WTC11 (cell line): ENCODE measurements at regions of chr6 and their contacts with region 1.

Region 1: DNA sequence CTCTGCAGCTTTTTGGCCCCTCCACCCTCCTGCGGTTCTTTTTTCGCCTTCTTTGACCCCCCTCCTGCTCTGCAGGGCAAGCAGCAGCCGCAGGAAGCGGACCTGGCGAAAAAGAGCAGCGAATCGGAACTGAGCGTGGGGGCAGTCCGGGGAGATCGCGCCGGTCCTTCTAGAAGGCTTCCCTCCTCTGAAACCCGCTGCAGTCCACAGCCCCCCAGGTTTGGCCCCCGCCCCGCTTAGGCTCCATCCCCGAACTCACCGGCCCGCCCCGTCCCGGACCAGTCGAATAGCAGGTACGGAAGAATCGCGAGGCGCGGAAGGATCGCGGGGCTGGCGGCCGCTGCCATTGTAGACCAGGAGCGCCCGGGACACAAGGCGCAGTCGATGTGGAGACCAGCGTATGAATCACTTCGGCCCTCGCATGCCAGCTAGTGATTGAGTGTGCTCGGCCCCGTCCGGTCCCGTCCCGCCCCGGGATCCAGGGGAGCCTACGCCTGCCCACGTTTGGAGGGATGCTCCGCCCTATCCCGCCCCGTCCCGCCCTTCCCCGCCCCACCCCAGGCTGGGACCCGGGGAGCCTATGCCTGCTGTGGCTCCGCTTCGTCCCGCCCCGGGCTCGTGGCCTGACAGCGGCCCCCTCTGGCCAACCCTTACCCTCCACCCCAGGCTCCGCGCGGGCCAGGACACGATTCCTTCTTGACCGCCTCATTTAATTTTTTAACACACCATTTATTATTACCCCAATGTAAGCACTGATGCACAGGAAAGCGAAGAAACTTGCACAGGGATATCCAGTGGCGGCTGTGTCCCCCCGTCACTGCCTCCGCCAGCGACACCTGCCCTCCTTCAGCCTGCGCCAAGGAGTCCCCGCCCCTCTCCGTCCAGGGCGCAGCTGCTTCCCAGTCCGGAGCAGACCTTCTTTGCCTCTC is at the start of gene ULBP3:
- DNase-seq: peak; percentile 83
- ATAC-seq: peak; percentile 90
- H3K4me3 Mint-ChIP-seq: peak within 1 kb of the TSS; percentile 74
- H3K27ac Mint-ChIP-seq: no peak within 1 kb of the TSS
- H3K4me1 Mint-ChIP-seq: peaks cover 12% of the 10 kb centered on the region
- H3K27me3 Mint-ChIP-seq: peaks cover 40% of the 10 kb centered on the region
- CTCF ChIP-seq: no peak
- total RNA-seq, gene ULBP3: 4.0 to 6.0 TPM (median 5.6 TPM) in 3 replicates

Region 2: DNA sequence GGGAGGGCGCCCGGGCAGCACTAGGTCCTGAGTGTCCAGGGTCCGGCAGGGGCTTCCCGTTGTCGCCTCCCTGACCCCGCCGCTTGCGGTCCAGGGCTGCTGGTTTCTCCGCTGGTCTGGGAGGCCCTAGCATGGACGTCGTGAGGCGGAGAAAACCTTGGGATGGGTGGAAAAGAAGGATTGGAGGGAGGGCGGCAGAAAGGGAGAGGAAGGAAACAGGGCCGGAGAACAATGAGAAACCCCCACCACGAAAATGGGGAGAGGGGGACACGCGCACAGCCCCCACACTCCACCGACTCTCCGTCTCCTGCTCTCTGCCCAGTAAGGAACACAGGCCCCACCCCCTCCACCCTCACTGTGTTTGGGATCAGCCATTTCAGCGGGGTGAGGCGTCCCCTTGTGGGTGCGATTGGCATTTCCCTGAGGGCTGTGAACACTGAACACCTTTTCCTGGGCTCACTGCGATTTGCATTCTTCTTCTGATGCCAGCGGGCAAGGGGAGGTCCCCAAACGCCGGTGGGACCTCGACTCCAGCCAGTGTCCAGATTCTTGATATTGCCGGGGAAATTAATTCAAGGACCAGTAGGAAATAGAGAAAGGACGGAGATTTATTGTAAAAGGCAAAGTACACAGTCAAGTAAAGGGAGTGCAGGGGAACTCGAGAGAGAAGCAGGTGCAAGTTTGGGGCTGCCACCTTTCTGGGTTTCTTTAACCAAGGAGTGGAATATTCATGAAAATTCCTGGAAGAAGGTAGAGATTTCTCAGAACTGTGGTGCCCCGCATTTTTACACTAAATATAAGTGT is 142.8 kb before region 1 on chr6:
- CTCF ChIA-PET with region 1: no interaction called
- POLR2A ChIA-PET with region 1: no interaction called
- DNase-seq: peak; percentile 93
- ATAC-seq: peak; percentile 80
- H3K4me3 Mint-ChIP-seq: peak overlapping the region; percentile 70
- H3K27ac Mint-ChIP-seq: no peak overlapping the region
- H3K4me1 Mint-ChIP-seq: peaks cover 14% of the 10 kb centered on the region
- H3K27me3 Mint-ChIP-seq: peaks cover 97% of the 10 kb centered on the region
- CTCF ChIP-seq: peak; percentile 86

Region 3: DNA sequence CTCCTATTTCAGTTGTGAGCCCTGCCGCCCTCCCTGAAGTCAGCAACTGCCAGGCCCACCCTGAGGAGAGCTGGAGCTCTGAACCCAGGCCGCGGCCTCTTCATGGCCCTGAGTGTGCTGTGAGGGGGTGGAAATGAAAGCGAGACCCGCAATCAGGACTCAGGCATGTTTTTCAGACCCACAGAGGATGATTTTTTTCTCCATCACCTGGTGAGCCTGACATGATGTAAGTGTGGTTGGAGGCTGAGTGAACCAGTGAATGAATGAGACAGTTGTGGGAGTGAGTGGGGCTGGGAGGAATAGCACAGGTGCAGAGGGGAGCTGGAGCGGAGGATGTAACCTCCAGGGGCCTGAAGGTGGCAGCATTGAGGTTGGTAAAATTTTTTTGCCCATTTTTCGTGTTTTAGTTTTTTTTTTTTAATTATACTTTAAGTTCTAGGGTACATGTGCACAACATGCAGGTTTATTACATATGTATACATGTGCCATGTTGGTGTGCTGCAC is 62.0 kb before region 1 on chr6:
- CTCF ChIA-PET with region 1: interaction called, 10 read pairs
- POLR2A ChIA-PET with region 1: no interaction called
- DNase-seq: no peak
- ATAC-seq: peak; percentile 10
- H3K4me3 Mint-ChIP-seq: no peak overlapping the region
- H3K27ac Mint-ChIP-seq: no peak overlapping the region
- H3K4me1 Mint-ChIP-seq: peaks cover 11% of the 10 kb centered on the region
- H3K27me3 Mint-ChIP-seq: peaks cover 96% of the 10 kb centered on the region
- CTCF ChIP-seq: peak; percentile 42; the same call in 1 of the 2 replicates

Region 4: DNA sequence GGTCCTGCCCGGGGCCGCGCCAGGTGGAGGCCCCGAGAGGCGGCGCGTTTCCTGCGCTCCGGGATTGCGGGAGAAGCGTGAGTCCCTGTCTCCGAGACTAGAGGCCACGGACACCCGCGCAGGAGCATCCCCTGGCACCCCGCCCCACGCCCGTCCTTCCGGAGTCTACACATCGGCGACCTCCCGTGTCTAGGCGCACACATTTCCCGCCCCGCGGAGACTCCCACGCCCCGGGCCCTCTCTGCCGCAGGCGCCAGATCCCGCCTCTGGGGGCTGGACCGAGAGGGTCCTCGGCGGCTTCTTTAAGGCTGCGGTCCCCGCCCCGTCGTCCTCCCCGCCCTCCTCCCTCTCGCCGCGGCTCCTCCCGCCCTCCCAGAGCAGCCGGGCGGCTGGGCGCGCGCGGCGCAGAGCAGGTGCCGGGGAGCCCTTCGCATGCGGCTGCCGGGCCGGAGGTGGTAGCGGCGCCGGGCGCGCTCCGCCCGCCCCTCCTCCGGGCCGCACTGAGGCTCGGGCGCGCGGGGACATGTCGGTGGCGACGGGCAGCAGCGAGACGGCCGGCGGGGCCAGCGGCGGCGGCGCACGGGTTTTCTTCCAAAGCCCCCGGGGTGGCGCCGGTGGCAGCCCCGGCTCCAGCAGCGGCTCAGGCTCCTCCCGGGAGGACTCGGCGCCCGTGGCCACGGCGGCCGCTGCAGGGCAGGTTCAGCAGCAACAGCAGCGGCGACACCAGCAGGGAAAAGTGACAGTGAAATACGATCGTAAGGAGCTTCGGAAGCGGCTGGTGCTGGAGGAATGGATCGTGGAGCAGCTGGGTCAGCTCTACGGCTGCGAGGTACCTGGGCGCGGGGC is 73.9 kb after region 1 on chr6 and contains the start of gene PPP1R14C:
- CTCF ChIA-PET with region 1: interaction called, 15 read pairs
- POLR2A ChIA-PET with region 1: no interaction called
- DNase-seq: peak; percentile 71
- ATAC-seq: peak; percentile 76
- H3K4me3 Mint-ChIP-seq: peak within 1 kb of the TSS; percentile 75
- H3K27ac Mint-ChIP-seq: no peak within 1 kb of the TSS
- H3K4me1 Mint-ChIP-seq: peaks cover 31% of the 10 kb centered on the region
- H3K27me3 Mint-ChIP-seq: peaks cover 74% of the 10 kb centered on the region
- CTCF ChIP-seq: no peak
- total RNA-seq, gene PPP1R14C: 0.66 to 1.1 TPM (median 0.80 TPM) in 3 replicates

Region 5: DNA sequence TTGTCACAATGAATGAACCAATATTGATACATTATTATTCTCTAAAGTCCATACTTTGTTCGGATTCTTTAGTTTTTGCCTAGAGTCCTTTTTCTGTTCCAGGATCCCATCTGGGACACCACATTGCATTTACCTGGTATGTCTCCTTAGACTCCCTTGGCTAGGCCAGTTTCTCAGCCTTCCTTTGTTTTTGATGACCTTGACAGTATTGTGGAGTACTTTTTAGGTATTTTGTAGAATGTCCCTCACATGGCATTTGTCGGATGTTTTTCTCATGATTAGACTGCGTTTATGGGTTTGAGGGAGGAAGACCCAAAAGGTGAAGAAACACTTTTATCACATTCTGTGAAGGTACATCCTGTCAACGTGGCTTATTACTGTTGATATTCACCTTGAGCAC is 90.8 kb after region 1 on chr6:
- CTCF ChIA-PET with region 1: no interaction called
- POLR2A ChIA-PET with region 1: no interaction called
- DNase-seq: no peak
- ATAC-seq: no peak
- H3K4me3 Mint-ChIP-seq: no peak overlapping the region
- H3K27ac Mint-ChIP-seq: no peak overlapping the region
- H3K4me1 Mint-ChIP-seq: no peaks in the 10 kb centered on the region
- H3K27me3 Mint-ChIP-seq: peaks cover 3% of the 10 kb centered on the region; the same call in 1 of the 2 replicates
- CTCF ChIP-seq: no peak

Region 6: GRCh38 chr6:150243620-150244314 is 174.8 kb after region 1 on chr6:
- CTCF ChIA-PET with region 1: no interaction called
- POLR2A ChIA-PET with region 1: no interaction called
- DNase-seq: no peak
- ATAC-seq: no peak
- H3K4me3 Mint-ChIP-seq: no peak overlapping the region
- H3K27ac Mint-ChIP-seq: no peak overlapping the region
- H3K4me1 Mint-ChIP-seq: no peaks in the 10 kb centered on the region
- H3K27me3 Mint-ChIP-seq: no peaks in the 10 kb centered on the region; the same call in 1 of the 2 replicates
- CTCF ChIP-seq: no peak

Region 7: DNA sequence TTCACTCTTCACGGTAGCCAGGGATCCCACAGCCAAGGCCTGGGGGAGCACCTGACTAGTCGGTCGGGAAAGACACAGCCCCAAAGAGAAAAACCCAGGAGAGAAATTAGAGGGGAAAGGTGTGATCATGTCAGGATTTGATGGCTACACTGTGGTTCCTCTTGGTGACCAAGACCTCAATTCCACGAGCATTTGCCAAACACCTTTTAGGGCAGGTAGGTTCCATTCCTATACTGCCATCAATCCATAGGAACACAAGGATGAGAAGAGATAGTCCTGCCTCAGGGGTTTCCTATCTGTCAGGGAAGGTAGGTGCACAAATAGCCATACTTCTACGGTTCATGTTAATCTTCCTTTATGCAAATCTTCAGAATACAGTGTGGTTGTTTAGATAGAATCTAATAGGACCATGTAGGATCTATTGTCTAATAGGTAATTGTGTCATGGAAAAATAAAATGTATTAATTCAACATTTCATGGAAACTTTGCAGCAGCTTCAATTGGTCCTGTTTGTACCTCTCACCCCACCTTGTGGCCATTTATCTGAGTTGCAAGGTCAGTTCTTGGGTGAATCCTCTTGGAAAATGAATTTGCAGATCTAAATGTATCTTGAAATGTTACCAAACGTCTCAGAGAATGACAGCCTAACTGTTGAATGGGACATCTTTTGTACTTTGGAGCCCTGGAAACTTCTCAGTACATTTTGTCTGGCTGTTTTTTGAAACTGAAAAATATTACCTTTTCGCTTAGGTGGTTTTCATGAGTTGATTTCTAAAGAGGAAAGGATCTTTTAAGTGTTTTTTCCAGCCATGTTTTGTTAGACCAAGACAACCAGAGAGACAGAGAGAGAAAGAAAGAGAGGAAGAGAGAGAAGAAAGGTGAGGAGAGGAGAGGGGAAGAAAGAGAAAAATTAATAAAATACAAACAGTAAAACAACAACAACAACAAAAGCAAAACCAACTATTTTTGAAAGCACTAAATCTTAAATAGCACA is 266.1 kb after region 1 on chr6:
- CTCF ChIA-PET with region 1: interaction called, 12 read pairs
- POLR2A ChIA-PET with region 1: no interaction called
- DNase-seq: peak; percentile 47
- ATAC-seq: no peak
- H3K4me3 Mint-ChIP-seq: no peak overlapping the region
- H3K27ac Mint-ChIP-seq: no peak overlapping the region
- H3K4me1 Mint-ChIP-seq: 0 out of 2 replicates have a peak, but pooled peaks cover 3% of the 10 kb centered on the region
- H3K27me3 Mint-ChIP-seq: no peaks in the 10 kb centered on the region; the same call in 1 of the 2 replicates
- CTCF ChIP-seq: peak; percentile 61

Region 8: DNA sequence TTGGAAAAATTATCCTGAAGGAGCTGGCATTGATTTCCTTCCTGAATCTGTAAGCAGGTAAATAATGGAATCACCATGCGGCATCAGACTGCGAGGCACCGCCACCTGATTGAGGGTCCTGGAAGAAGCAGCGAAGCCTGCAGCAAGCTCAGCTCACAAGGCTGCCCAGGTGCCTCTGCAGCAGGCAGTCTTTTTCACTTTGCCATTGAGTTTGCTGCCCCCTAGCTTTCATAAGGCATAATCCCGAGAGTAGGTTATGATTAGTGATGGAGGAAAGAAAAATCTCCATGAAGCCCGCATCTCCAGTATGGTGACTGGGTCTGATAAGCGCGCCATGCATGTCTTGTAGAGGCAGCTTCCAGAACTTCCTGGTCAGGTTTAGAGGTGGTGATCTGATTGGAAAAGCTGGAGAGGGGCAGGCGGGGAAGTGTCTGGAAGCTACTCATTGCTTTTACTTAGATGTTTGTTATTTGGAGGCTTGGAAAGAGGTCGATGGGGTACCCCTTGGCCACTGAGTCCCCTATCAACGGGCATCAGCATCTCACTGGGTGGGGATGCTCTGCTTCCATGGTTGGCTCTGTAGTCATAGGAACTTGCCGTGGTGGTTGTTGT is 326.5 kb after region 1 on chr6:
- CTCF ChIA-PET with region 1: interaction called, 23 read pairs
- POLR2A ChIA-PET with region 1: interaction called, 3 read pairs
- DNase-seq: peak; percentile 63
- ATAC-seq: peak; percentile 96
- H3K4me3 Mint-ChIP-seq: no peak overlapping the region
- H3K27ac Mint-ChIP-seq: no peak overlapping the region
- H3K4me1 Mint-ChIP-seq: no peaks in the 10 kb centered on the region
- H3K27me3 Mint-ChIP-seq: peaks cover 11% of the 10 kb centered on the region
- CTCF ChIP-seq: peak; percentile 51